ENCODE measurements at regions of chr19 and their contacts with region 1.

Region 1: DNA sequence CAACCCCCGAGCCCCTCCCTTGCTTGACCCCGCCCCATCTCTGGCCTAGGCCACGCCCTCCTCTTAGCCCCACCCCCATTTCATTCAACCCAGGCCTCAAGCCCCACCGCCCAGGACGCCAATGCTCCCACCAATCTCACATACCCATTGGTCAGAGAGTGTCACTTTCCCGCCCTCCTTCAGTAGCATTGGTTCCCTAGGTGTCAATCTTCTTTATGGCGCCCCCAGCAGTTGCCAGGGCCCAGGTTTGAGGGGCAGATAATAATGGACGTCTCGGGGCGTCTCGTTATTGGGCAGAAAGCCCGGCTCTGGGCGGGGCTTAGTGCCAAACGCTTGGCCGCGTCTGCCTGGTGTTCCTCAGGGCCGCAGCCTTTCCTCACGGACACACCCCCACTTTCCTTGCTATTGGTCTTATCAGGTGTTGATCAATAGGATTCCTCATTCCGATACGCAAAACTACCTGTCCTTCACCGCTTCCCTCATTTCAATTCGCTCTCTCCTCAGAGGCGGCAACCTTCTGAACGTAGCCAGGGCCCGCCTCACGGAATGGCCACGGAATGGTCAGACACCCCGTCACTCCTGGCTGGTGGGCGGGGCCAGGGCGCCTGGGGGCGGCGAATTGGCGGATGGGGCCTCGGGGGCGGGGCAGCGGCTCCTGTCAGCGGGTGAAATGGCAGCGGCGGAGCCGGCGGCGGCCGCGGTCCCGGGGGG is at the start of gene EVI5L:
- DNase-seq: peak; percentile 100
- H3K4me3 ChIP-seq: peak within 1 kb of the TSS; percentile 57 to 75 (median 60)
- H3K27ac ChIP-seq: no peak within 1 kb of the TSS
- H3K4me1 ChIP-seq: peaks cover 27% of the 10 kb centered on the region
- H3K27me3 ChIP-seq: no peaks in the 10 kb centered on the region
- CTCF ChIP-seq: no peak
- total RNA-seq, gene EVI5L: 15.2 to 17.5 TPM

Region 2: DNA sequence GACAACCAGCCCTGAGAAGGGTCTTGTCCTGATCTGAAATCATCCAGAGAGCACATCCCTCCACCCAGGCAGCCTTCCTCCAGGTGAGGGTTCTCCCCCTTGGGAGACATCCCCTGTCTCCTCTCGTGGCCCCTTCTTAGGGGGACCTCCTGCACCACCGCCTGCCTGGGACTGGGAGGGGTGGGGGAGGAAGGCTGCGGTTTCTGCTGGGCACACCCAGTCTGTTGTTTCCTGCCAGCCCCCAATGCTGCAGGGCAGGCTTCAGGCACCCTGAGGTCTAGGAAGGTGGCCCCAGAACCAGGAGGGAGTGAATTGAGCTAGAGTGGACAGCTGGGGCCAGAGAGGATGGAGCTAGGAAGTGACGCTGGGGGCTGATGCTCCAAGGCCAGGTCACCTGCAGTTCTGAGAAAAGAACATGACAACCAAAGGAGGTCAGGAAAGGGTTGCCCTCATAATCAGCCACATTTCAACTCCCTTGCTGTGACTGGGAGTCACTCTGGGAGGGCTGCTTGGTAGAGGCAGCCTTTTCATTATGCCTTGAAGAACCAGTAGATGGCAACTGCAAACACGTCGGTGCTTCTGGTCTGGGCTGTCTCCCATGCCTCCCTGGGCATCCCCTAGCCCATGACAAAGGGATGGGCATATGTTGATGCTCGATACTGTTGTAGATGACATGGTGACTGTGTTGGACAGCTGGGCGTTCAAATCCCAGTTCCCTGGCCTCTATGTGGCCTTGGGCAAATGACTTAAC is 479.6 kb before region 1 on chr19:
- CTCF ChIA-PET with region 1: no interaction called
- dilution Hi-C with region 1: no loop called
- in situ Hi-C with region 1: loop called in 1 of 2 experiments (anchors 25 kb)
- intact Hi-C with region 1: loop called (anchors 1 kb)
- DNase-seq: no peak
- H3K4me3 ChIP-seq: no peak overlapping the region
- H3K27ac ChIP-seq: no peak overlapping the region
- H3K4me1 ChIP-seq: no peaks in the 10 kb centered on the region
- H3K27me3 ChIP-seq: no peaks in the 10 kb centered on the region
- CTCF ChIP-seq: no peak

Region 3: DNA sequence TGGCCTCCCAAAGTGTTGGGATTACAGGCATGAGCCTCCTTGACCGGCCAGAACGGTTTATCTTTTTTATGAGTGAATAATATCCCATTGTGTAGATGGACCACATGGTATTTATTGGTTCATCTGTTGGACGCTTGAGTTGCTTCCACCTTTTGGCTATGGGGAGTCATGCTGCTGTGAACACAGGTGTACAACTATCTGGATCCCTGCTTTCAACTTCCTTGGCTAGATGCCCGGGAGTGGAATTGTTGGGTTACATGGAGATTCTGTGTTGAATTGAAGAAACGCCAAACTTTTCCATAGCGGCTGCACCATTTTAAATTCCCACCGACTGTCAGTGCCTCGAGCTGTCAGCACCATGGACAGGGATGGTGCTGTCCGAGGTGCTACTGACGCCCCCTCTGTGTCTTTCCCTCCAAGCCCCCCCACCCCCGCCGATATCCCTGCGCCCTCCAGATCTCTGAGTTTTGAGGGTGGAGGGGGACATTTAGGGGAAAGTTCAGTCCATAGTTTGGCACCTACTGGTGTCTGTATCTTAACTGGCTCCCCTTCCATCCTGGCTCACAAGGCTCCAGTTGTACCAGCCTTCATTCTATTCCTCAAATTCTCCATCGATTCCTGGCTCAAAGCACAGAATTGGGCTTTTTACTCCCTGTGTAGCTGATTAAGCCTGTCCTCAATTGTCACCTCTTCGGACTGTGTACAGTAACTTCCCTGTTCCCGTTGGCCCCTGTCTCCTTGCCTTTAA is 266.9 kb before region 1 on chr19:
- CTCF ChIA-PET with region 1: interaction called, 29 read pairs
- dilution Hi-C with region 1: no loop called
- in situ Hi-C with region 1: no loop called
- intact Hi-C with region 1: no loop called
- DNase-seq: no peak
- H3K4me3 ChIP-seq: no peak overlapping the region
- H3K27ac ChIP-seq: no peak overlapping the region
- H3K4me1 ChIP-seq: no peaks in the 10 kb centered on the region
- H3K27me3 ChIP-seq: no peaks in the 10 kb centered on the region
- CTCF ChIP-seq: no peak

Region 4: DNA sequence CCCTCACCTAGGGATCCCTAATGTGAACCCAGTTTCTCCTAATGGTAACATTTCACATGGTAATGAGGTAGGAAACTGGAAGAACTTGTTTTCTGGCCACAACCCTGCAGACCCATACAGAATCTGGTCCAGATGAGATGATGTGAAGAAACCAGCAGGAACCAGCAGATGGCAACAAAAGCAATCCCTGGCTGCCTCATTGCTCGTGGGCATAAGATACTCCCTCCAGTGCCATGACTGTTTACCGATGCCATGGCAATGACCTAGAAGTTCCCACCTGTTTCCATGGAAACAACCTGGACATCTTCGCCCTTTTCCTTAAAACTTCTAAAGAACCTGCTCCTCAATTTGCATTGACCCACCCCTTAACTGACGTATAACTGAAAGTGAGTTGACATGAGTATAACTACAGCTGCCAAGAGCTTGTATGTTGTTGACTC is 80.9 kb before region 1 on chr19:
- CTCF ChIA-PET with region 1: no interaction called
- dilution Hi-C with region 1: no loop called
- in situ Hi-C with region 1: no loop called
- intact Hi-C with region 1: loop called (anchors 1 kb)
- DNase-seq: peak; percentile 48
- H3K4me3 ChIP-seq: no peak overlapping the region
- H3K27ac ChIP-seq: no peak overlapping the region
- H3K4me1 ChIP-seq: no peaks in the 10 kb centered on the region
- H3K27me3 ChIP-seq: no peaks in the 10 kb centered on the region
- CTCF ChIP-seq: peak; percentile 2 to 52

Measured in mammary epithelial cell (primary cell).